Psoas muscle (tissue), 8 donors: ENCODE measurements at regions of chr15 and their contacts with region 1.

Region 1: DNA sequence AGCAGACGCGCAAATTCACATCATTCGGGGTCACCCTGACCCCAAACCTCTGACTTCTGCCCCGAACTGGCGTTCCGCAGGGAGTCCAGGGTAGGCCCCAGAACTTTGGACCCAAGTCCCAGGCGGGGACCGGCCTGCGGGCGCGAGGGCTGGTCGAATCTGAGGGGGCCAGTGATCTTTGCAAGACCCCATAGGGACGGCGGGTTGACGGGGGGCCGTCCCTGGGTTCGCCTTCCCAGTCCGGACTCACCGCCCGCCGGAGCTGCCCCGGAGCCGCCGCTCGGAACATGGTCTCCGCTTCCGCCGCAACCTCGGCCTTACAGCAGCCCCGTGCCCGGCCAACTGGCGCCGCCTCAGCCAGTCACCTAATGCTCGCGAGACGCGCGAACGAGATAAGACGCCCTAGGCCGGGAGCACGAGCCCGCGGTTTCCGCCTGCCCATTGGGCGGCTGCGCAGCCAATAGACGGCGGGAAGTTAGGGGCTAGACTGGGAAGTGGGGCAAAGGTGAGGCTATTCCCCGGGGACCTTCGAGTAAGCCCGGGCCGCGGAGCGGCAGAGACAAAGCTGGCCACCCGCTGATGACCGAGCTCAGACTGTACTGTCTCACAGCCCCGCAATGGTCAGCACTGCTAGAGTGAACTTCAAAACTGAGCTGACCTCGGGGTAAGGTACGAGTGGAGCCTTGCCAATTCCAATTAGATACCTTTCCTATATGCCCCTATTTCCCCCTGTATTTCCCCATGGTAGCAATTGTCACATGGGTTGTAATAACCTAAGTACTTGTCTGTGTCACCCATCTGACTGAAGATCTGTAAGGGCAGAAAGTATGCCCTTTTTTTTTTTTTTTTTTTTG is at the start of gene ETFA:
- DNase-seq: peak; percentile 99
- ATAC-seq: peak; percentile 97 to 100 (median 98)
- H3K4me3 ChIP-seq: peak within 1 kb of the TSS; percentile 88
- H3K27ac ChIP-seq: peak within 1 kb of the TSS; percentile 92
- H3K4me1 ChIP-seq: peaks cover 12% of the 10 kb centered on the region
- H3K27me3 ChIP-seq: no peaks in the 10 kb centered on the region
- CTCF ChIP-seq: no peak
- total RNA-seq, gene ETFA: 258 to 315 (median 279) TPM

Region 2: DNA sequence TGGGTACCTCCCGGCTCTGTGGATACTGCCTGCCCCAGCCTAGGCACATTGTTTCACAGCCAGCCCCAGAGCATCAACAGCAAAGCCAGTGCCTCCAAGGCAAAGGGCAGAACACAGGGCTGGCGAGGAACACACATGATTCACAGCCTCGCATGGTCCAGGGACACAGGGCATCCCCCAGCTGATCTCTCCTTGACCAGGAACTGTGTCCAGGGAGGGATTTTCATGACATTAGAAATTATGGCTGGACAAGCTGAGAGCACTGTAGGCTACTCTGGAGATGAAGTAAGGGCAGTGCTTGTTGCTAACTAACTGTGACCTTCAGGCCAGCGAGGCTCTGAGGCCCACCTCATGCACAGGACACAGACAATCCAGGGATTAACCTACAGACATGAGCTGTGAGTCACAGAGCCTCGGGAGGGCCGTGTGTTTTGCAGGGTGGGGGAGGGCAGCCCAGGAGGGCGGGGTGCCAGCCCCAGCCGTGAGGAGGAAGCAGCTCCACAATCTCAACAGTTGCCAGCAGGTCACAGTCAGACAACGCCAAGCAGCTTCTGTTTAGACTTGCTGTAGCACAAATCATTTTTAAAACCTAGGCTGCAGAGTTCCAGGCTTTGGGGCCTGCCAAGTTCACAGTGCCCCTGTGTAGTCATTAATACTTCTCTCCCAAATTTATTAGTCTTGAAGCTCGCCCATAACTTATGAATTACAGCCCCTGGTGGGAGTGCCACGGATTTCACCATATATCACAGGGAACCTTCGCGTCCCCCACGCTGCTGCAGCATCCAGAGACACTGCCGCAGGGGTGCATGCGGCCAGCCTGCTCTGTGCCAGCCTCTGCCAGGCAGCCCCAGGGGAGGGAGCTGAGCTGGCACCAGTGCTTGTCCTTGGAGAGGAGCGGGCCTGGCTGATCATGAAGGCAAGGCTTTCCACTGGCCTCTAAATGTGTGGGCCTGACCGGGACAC is 114.8 kb before region 1 on chr15:
- intact Hi-C with region 1: loop called in 1 of 2 experiments (anchors 5 kb)
- DNase-seq: peak; percentile 79 to 91
- ATAC-seq: peak; percentile 86 to 89 (median 88)
- H3K4me3 ChIP-seq: peak overlapping the region; percentile 26
- H3K27ac ChIP-seq: peak overlapping the region; percentile 82
- H3K4me1 ChIP-seq: peaks cover 56% of the 10 kb centered on the region
- H3K27me3 ChIP-seq: no peaks in the 10 kb centered on the region
- CTCF ChIP-seq: no peak

Region 3: DNA sequence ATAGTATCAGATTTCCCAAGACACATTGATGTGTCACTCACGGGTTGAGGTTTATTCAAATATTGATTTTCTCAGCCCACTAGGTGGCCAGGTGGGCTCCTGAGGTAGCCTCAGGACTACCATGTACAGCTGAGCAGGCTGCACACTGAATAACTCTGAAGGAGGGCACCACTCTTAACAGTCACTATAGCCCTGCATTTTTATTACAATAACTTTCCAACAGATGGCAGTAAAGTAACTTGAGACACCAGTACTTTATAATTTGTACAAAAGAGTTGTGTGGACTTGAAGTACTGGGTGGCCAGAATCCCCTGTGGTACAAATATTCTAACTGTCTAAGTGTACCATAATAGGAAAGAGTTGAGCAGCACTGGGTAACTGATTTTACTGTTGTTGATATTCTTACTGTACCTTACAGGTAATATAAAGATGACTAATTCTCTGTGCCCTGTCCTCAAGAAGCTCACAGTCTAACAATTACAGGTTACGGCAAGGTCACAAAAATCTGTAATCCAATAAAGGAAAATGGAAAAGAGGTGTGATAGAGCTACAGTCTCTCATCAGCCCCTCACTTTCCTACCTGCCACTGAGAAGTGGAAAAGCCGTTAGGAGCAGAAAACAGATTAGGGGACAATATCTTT is 76.0 kb before region 1 on chr15:
- intact Hi-C with region 1: loop called in 1 of 2 experiments (anchors 10 kb)
- DNase-seq: no peak
- ATAC-seq: peak; percentile 39 to 86 (median 83)
- H3K4me3 ChIP-seq: no peak overlapping the region
- H3K27ac ChIP-seq: no peak overlapping the region
- H3K4me1 ChIP-seq: peaks cover 5% of the 10 kb centered on the region
- H3K27me3 ChIP-seq: no peaks in the 10 kb centered on the region
- CTCF ChIP-seq: peak; percentile 58

Region 4: GRCh38 chr15:76345880-76346668 is 34.7 kb after region 1 on chr15:
- intact Hi-C with region 1: no loop called
- DNase-seq: no peak
- ATAC-seq: peak in 2 of 4 donors; percentile 19 to 31
- H3K4me3 ChIP-seq: peak overlapping the region; percentile 60
- H3K27ac ChIP-seq: no peak overlapping the region
- H3K4me1 ChIP-seq: peaks cover 26% of the 10 kb centered on the region
- H3K27me3 ChIP-seq: peaks cover 5 to 87% (median 44%) of the 10 kb centered on the region in 3 donors
- CTCF ChIP-seq: no peak

Region 5: DNA sequence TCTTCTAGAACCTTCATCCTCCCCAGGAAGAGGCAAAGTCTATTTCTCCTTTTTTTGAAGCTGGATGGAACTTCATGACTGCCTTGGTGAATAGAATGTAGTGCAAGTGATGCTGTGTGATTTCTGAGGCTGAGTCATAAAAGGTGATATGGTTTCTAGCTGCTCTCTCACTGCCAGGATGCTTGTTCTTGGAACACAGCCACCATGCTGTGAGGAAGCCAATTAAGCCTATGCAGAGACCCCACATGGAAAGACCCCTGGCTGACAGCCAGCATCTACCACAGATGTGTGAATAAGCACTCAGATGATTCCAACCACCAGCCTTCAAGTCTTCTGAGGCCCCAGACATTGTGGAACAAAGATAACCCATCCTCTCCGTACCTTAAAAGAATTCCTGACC is 82.3 kb after region 1 on chr15:
- intact Hi-C with region 1: no loop called
- DNase-seq: no peak
- ATAC-seq: no peak
- H3K4me3 ChIP-seq: no peak overlapping the region
- H3K27ac ChIP-seq: no peak overlapping the region
- H3K4me1 ChIP-seq: no peaks in the 10 kb centered on the region
- H3K27me3 ChIP-seq: no peaks in the 10 kb centered on the region
- CTCF ChIP-seq: no peak